ENCODE measurements at regions of chr3 and their contacts with region 1.

Region 1: DNA sequence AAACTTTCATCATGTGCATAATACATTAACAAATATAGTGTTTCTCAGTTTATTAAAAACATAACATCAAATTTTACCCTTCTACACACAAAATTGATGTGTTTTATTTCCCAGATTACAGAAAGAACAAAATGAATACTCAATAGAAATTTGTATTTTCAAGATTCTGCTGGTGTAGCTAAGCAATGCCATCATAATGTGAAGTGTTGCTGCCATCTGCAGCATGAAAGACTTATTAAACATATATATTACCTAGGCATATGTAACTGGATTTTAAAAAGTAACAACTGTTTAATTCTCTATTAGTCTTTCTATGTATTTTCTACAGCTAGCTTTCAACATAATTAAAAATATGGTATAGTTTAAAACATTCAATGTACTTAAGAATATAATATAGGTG is 27.5 kb downstream of the PLSCR5 start:
- ATAC-seq: peak in 3 of 8 experiments; percentile 37 to 74 (median 71)
- H3K4me3 ChIP-seq: no peak overlapping the region
- H3K27ac ChIP-seq: no peak overlapping the region
- H3K4me1 ChIP-seq: no peaks in the 10 kb centered on the region

Region 2: GRCh38 chr3:146326670-146327543 is 250.8 kb before region 1 on chr3:
- in situ Hi-C with region 1: loop called in 3 of 9 experiments (anchors 10 to 25 kb)
- ATAC-seq: peak in 3 of 8 experiments; percentile 87 to 89 (median 89)
- H3K4me3 ChIP-seq: no peak overlapping the region
- H3K27ac ChIP-seq: no peak overlapping the region
- H3K4me1 ChIP-seq: no peaks in the 10 kb centered on the region

Region 3: GRCh38 chr3:146334151-146334550 is 243.5 kb before region 1 on chr3:
- in situ Hi-C with region 1: loop called in 3 of 9 experiments (anchors 10 to 25 kb)
- ATAC-seq: peak in 2 of 8 experiments; percentile 22 to 47
- H3K4me3 ChIP-seq: no peak overlapping the region
- H3K27ac ChIP-seq: no peak overlapping the region
- H3K4me1 ChIP-seq: no peaks in the 10 kb centered on the region

Measured in motor neuron (in vitro differentiated cells).